K562 (cell line): ENCODE measurements at regions of chrX and their contacts with region 1.

Region 1: DNA sequence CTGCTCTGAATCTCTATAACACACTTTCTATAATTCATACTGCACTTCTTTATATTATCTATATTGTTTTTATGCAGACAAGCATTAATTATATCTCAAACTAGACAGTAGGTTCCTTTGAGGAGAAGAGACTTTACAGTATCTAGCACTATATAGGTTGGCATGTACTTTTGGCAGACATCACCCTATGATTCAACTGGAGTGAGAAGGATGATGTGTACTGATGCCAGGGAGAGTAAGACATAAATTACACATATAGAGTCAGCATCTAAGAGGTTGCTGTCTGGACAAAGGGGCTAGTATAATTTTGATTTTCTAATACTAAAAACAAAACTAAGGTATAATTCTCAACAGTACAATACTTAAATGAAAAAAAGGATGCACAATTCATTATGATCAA is 5.1 kb upstream of the RBM41 start:
- DNase-seq: no peak
- ATAC-seq: no peak
- H3K4me3 ChIP-seq: no peak overlapping the region
- H3K27ac ChIP-seq: no peak overlapping the region
- H3K4me1 ChIP-seq: peaks cover 0 to 6% of the 10 kb centered on the region in 2 experiments; a peak in 2 of 5 replicates
- H3K27me3 ChIP-seq: no peaks in the 10 kb centered on the region
- CTCF ChIP-seq: no peak
- EP300 ChIP-seq: no peak
- POLR2A ChIP-seq: no peak
- RAD21 ChIP-seq: no peak

Region 2: DNA sequence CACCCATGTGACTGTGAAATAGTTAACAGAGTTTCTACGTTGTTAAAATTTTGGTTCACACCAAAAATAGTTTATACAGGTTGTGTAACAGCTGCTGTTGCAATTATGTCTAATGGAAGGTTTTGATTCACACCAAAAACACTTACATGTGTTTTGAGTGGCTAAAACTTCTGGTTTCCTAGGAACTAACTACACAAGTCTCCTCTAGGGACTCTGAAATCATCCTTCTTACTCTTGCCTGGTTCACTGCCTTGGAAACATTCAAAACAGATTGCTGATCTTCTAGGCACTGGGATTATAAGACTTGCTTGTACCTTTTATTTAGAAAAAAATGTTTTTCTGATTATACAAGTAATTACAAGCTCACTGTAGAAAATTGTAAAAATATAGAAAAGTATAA is 108.8 kb before region 1 on chrX:
- CTCF ChIA-PET with region 1: no interaction called
- POLR2A ChIA-PET with region 1: no interaction called
- in situ Hi-C with region 1: no loop called
- intact Hi-C with region 1: no loop called
- DNase-seq: no peak
- ATAC-seq: no peak
- H3K4me3 ChIP-seq: no peak overlapping the region
- H3K27ac ChIP-seq: no peak overlapping the region
- H3K4me1 ChIP-seq: no peaks in the 10 kb centered on the region
- H3K27me3 ChIP-seq: no peaks in the 10 kb centered on the region; a peak in 1 of 5 replicates
- CTCF ChIP-seq: no peak
- EP300 ChIP-seq: no peak
- POLR2A ChIP-seq: no peak
- RAD21 ChIP-seq: no peak

Region 3: GRCh38 chrX:107227780-107228485 is 104.2 kb after region 1 on chrX:
- CTCF ChIA-PET with region 1: no interaction called
- POLR2A ChIA-PET with region 1: no interaction called
- in situ Hi-C with region 1: no loop called
- intact Hi-C with region 1: no loop called
- DNase-seq: no peak
- ATAC-seq: no peak
- H3K4me3 ChIP-seq: no peak overlapping the region
- H3K27ac ChIP-seq: no peak overlapping the region
- H3K4me1 ChIP-seq: peaks cover 0 to 5% of the 10 kb centered on the region in 2 experiments; a peak in 2 of 5 replicates
- H3K27me3 ChIP-seq: no peaks in the 10 kb centered on the region
- CTCF ChIP-seq: no peak
- EP300 ChIP-seq: no peak
- POLR2A ChIP-seq: no peak
- RAD21 ChIP-seq: no peak

Region 4: GRCh38 chrX:107290019-107290418 is 166.3 kb after region 1 on chrX:
- CTCF ChIA-PET with region 1: no interaction called
- POLR2A ChIA-PET with region 1: no interaction called
- in situ Hi-C with region 1: no loop called
- intact Hi-C with region 1: loop called (anchors 10 kb)
- DNase-seq: peak in 1 of 4 experiments; percentile 8
- ATAC-seq: peak; percentile 55; the same call in 2 of the 3 replicates
- H3K4me3 ChIP-seq: no peak overlapping the region
- H3K27ac ChIP-seq: no peak overlapping the region
- H3K4me1 ChIP-seq: no peaks in the 10 kb centered on the region
- H3K27me3 ChIP-seq: no peaks in the 10 kb centered on the region
- CTCF ChIP-seq: peak in 1 of 3 experiments; percentile 45; a peak in 2 of 6 replicates
- EP300 ChIP-seq: no peak
- POLR2A ChIP-seq: no peak
- RAD21 ChIP-seq: peak in 1 of 2 experiments; percentile 58; a peak in 2 of 4 replicates